ENCODE measurements at regions of chr5 and their contacts with region 1.

Region 1: GRCh38 chr5:120096413-120096812 is 367.7 kb upstream of the PRR16 start:
- DNase-seq: no peak

Region 2: GRCh38 chr5:120457839-120458507 is 361.6 kb after region 1 on chr5:
- in situ Hi-C with region 1: loop called (anchors 25 kb)
- DNase-seq: peak; percentile 68

Measured in KBM-7 (cell line).